HCT116 (cell line): ENCODE measurements at regions of chr2 and their contacts with region 1.

Region 1: DNA sequence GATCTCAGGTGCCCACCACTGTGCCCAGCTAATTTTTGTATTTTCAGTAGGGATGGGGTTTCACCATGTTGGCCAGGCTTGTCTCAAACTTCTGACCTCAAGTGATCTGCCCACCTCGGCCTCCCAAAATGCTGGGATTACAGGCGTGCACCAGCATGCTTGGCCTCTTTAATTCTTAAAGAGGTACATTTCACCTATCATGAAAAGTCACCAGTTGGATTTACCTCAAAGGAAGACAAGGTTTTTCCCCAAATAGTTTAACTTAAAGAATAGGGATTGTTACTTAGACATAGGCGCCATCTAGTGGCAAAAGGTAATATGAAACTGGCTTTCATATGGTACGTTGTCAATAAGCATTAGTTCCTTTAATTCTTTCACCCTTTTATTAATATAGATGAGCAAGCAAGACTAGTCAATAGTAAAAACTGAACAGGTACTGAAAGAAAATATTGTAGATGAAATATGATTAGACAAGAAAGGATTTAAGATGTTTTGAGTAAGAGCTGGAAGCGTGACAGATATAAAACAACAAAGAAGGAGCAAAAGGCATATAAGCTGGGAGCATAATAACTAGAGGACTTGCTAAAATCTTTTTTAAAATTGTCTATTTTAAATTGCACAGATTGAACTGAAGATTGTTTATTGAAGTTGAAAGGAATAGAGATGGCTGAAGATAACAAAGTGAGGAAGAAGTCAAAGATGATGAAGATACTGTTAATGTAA is 35.0 kb upstream of the PSMD14 start:
- DNase-seq: peak; percentile 69
- ATAC-seq: peak; percentile 91
- H3K4me3 ChIP-seq: no peak overlapping the region
- H3K27ac ChIP-seq: no peak overlapping the region
- H3K4me1 ChIP-seq: no peaks in the 10 kb centered on the region
- H3K27me3 ChIP-seq: no peaks in the 10 kb centered on the region
- CTCF ChIP-seq: peak; percentile 61 to 83 (median 69)
- POLR2A ChIP-seq: no peak
- RAD21 ChIP-seq: peak; percentile 82

Region 2: DNA sequence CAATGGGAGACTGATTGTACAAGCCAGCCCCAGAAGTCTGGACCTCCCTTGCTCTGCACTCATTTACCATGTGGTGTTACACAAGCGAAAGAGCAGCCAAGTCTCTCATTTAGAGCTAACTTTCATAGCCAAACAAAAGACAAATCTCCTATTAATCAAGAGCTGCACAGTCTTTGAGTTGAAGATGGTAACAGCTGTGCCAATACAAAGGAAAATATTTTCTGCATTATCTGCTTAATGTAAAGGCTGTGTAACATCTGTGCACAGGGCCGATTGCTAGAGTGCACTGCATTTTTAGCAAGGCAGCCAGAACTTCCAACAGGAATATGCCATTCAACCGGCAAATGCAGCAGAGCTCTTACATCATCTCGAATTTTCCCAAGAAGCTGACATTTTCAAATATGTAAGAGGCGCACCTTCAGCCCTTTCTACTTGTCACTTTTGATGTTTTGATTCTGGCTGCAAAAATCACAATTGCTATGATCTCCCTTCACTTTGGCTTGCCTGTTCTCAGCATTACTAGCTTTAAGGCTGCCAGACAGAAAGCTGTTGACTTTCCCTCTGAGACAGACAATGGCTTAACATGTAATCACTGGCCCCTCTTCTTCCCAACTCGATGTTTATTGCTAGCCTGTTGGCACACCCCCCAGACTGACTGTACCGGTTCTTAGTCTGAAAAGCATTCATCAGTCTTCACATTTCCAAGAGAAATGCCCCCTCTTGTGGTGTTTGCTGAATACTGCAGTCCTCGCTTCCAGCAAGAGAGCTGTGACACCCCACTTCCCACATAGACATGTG is 209.8 kb before region 1 on chr2:
- CTCF ChIA-PET with region 1: no interaction called
- POLR2A ChIA-PET with region 1: no interaction called
- RAD21 ChIA-PET with region 1: interaction called in 1 of 2 experiments, 3 read pairs
- intact Hi-C with region 1: loop called (anchors 5 kb)
- DNase-seq: peak; percentile 75
- ATAC-seq: peak; percentile 97
- H3K4me3 ChIP-seq: no peak overlapping the region
- H3K27ac ChIP-seq: no peak overlapping the region
- H3K4me1 ChIP-seq: peaks cover 0 to 9% of the 10 kb centered on the region in 2 experiments; a peak in 3 of 4 replicates
- H3K27me3 ChIP-seq: no peaks in the 10 kb centered on the region
- CTCF ChIP-seq: peak; percentile 60 to 93 (median 90); a peak in 5 of 6 replicates
- POLR2A ChIP-seq: no peak
- RAD21 ChIP-seq: peak; percentile 87

Region 3: GRCh38 chr2:161223139-161223732 is 50.0 kb before region 1 on chr2:
- CTCF ChIA-PET with region 1: interaction called, 20 read pairs
- POLR2A ChIA-PET with region 1: no interaction called
- RAD21 ChIA-PET with region 1: interaction called in 1 of 2 experiments, 3 read pairs
- intact Hi-C with region 1: loop called (anchors 1 kb)
- DNase-seq: peak; percentile 37
- ATAC-seq: no peak
- H3K4me3 ChIP-seq: no peak overlapping the region
- H3K27ac ChIP-seq: no peak overlapping the region
- H3K4me1 ChIP-seq: no peaks in the 10 kb centered on the region
- H3K27me3 ChIP-seq: no peaks in the 10 kb centered on the region
- CTCF ChIP-seq: peak; percentile 39 to 65 (median 47); a peak in 4 of 6 replicates
- POLR2A ChIP-seq: no peak
- RAD21 ChIP-seq: peak; percentile 61

Region 4: DNA sequence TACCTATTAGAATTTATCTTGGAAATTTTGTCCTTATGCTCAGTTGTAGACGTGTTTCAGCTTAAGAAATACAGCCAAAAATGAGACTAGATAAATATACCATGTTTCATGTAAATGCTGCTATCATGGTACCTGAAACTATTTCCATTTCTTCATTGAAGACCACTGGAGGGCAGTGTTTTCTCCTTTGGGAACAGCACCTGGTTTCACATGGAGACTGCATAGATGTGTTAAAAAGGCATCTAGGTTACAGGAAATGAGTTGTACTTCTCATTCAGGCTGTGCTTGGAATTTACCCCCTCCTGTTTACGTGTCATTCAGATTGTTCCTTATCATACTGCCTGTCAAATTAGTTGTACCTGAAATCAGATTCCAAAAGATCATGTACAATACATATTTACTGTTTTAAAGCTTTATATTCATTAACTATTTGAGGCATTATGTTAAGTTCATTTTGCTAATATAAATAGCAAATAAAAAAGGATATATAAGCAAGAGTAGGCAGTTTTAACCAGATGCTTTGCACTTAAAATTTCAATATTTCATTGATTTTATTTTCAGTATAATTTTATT is 22.2 kb before region 1 on chr2:
- CTCF ChIA-PET with region 1: interaction called, 15 read pairs
- POLR2A ChIA-PET with region 1: no interaction called
- RAD21 ChIA-PET with region 1: no interaction called
- intact Hi-C with region 1: loop called (anchors 2 kb)
- DNase-seq: peak; percentile 69
- ATAC-seq: peak; percentile 91
- H3K4me3 ChIP-seq: no peak overlapping the region
- H3K27ac ChIP-seq: no peak overlapping the region
- H3K4me1 ChIP-seq: peaks cover under 1 to 6% of the 10 kb centered on the region in 2 experiments; a peak in 2 of 4 replicates
- H3K27me3 ChIP-seq: no peaks in the 10 kb centered on the region
- CTCF ChIP-seq: peak; percentile 61 to 78 (median 71)
- POLR2A ChIP-seq: no peak
- RAD21 ChIP-seq: peak; percentile 70

Region 5: GRCh38 chr2:161586517-161587167 is 313.4 kb after region 1 on chr2:
- CTCF ChIA-PET with region 1: no interaction called
- POLR2A ChIA-PET with region 1: no interaction called
- RAD21 ChIA-PET with region 1: no interaction called
- intact Hi-C with region 1: no loop called
- DNase-seq: peak; percentile 23
- ATAC-seq: peak; percentile 69
- H3K4me3 ChIP-seq: no peak overlapping the region
- H3K27ac ChIP-seq: no peak overlapping the region
- H3K4me1 ChIP-seq: no peaks in the 10 kb centered on the region
- H3K27me3 ChIP-seq: no peaks in the 10 kb centered on the region
- CTCF ChIP-seq: peak; percentile 59 to 84 (median 68); a peak in 5 of 6 replicates
- POLR2A ChIP-seq: no peak
- RAD21 ChIP-seq: peak; percentile 88

Region 6: GRCh38 chr2:161662373-161662772 is 389.2 kb after region 1 on chr2:
- CTCF ChIA-PET with region 1: no interaction called
- POLR2A ChIA-PET with region 1: no interaction called
- RAD21 ChIA-PET with region 1: no interaction called
- intact Hi-C with region 1: no loop called
- DNase-seq: no peak
- ATAC-seq: no peak
- H3K4me3 ChIP-seq: no peak overlapping the region
- H3K27ac ChIP-seq: no peak overlapping the region
- H3K4me1 ChIP-seq: no peaks in the 10 kb centered on the region
- H3K27me3 ChIP-seq: no peaks in the 10 kb centered on the region
- CTCF ChIP-seq: no peak
- POLR2A ChIP-seq: no peak
- RAD21 ChIP-seq: no peak

Region 7: DNA sequence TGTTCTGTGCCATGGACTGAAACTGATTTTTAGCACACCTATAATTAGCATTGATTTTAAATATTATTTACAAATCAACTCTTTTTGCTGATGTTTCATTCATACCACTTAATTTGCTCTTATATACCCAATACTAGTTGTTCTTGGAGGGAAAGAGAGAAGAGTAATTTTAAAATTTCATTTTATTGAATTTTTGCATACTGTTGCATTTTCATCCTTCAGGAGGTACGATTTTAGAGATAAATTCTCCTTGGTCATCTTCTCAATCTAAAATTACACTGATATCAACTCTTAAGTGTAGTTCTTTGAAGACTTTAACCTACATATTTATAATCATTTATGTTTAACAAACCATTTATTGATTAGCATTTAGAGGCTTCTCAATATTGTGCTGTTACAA is 422.0 kb after region 1 on chr2:
- CTCF ChIA-PET with region 1: no interaction called
- POLR2A ChIA-PET with region 1: no interaction called
- RAD21 ChIA-PET with region 1: no interaction called
- intact Hi-C with region 1: no loop called
- DNase-seq: no peak
- ATAC-seq: no peak
- H3K4me3 ChIP-seq: no peak overlapping the region
- H3K27ac ChIP-seq: no peak overlapping the region
- H3K4me1 ChIP-seq: no peaks in the 10 kb centered on the region
- H3K27me3 ChIP-seq: no peaks in the 10 kb centered on the region
- CTCF ChIP-seq: no peak
- POLR2A ChIP-seq: no peak
- RAD21 ChIP-seq: no peak

Region 8: DNA sequence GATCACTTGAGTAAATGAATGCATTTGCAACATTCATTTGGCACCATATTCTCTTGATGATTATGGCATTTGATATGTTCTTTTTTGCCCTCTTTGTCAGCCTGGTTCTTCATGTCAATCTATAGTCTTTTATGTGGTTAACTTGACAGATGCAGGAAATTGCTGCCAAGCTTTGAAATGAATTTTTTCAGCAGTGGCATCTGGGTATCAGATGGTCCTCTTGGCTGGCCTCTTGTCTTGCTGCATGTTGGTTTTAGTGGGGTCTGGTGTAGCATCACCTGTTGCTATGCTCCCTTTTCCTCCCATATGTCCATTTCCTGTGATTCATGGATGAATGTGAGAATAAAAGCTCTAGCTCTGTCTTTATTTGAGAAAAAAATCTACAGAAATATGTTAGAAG is 680.9 kb after region 1 on chr2:
- CTCF ChIA-PET with region 1: no interaction called
- POLR2A ChIA-PET with region 1: no interaction called
- RAD21 ChIA-PET with region 1: no interaction called
- intact Hi-C with region 1: loop called (anchors 10 kb)
- DNase-seq: no peak
- ATAC-seq: no peak
- H3K4me3 ChIP-seq: no peak overlapping the region
- H3K27ac ChIP-seq: no peak overlapping the region
- H3K4me1 ChIP-seq: no peaks in the 10 kb centered on the region
- H3K27me3 ChIP-seq: no peaks in the 10 kb centered on the region
- CTCF ChIP-seq: no peak
- POLR2A ChIP-seq: no peak
- RAD21 ChIP-seq: no peak